Activated CD4-positive, alpha-beta T cell treated with anti-CD3 and anti-CD28 coated beads for 36 hours (primary cell): ENCODE measurements at regions of chr9 and their contacts with region 1.

Region 1: GRCh38 chr9:132877824-132878694 is at the start of gene AK8:
- DNase-seq: peak; percentile 86
- ATAC-seq: peak; percentile 76
- H3K4me3 Mint-ChIP-seq: peak within 1 kb of the TSS; percentile 73
- H3K27ac Mint-ChIP-seq: peak within 1 kb of the TSS; percentile 13
- H3K4me1 Mint-ChIP-seq: peaks cover 21% of the 10 kb centered on the region
- H3K27me3 Mint-ChIP-seq: no peaks in the 10 kb centered on the region
- total RNA-seq, gene AK8: 0.21 TPM in 1 of 2 experiments, not detected in the other

Region 2: DNA sequence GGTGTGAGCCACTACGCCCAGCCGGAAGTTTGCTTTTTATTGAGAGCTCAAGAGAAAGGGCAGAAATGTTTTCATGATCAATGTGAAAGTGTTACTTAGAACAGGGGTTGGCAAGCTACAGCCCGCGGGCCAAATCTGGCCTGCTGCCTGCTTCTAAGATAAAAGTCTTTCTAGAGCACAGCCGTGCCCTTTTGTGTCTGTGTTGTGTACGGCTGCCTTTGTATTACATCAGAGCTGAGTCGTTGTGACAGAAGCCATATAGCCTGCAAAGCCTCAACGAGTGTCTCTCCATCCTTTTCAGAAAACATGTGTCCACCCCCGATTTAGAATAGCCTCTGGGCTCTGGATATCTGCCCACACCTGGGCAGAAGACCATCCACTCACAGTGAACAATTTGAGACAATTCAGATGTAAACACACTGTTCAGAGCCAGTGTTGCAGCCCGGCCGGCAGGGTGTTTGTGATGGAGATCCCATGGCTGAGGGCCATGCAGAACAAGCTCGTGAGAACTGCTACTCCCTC is 28.8 kb before region 1 on chr9:
- CTCF ChIA-PET with region 1: interaction called, 3 read pairs
- POLR2A ChIA-PET with region 1: no interaction called
- intact Hi-C with region 1: loop called in 1 of 2 experiments (anchors 1 kb)
- DNase-seq: peak; percentile 36
- ATAC-seq: peak; percentile 56
- H3K4me3 Mint-ChIP-seq: peak overlapping the region; percentile 43
- H3K27ac Mint-ChIP-seq: peak overlapping the region; percentile 72
- H3K4me1 Mint-ChIP-seq: peaks cover 17% of the 10 kb centered on the region
- H3K27me3 Mint-ChIP-seq: no peaks in the 10 kb centered on the region

Region 3: DNA sequence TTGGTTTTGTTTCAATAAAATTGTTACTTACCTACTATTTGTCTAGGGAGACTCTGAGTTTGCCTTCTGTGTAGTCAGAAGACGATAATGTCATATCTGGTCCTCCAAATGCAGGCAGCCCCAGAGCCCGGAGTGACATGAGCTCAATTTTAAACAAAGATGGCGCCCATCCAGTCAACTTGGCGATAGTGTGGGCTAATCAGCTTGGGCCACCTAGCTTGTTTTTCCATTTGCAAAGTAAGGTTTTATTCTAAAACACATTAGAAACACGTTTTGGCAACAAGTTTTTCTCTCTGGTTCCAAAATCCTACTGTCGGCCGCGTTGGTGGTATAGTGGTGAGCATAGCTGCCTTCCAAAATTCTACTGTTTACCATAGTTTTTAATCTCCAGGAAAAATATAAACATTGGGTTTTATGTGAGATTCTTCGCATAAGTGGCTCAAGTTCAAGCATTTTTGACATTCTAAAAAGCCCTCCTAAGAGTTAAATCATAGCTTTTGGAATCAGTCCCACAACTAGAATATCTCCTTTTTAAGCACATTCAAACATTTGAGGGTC is 53.2 kb after region 1 on chr9:
- CTCF ChIA-PET with region 1: no interaction called
- POLR2A ChIA-PET with region 1: no interaction called
- intact Hi-C with region 1: no loop called
- DNase-seq: no peak
- ATAC-seq: no peak
- H3K4me3 Mint-ChIP-seq: no peak overlapping the region
- H3K27ac Mint-ChIP-seq: no peak overlapping the region
- H3K4me1 Mint-ChIP-seq: no peaks in the 10 kb centered on the region
- H3K27me3 Mint-ChIP-seq: no peaks in the 10 kb centered on the region